ENCODE measurements at regions of chr10 and their contacts with region 1.

Region 1: DNA sequence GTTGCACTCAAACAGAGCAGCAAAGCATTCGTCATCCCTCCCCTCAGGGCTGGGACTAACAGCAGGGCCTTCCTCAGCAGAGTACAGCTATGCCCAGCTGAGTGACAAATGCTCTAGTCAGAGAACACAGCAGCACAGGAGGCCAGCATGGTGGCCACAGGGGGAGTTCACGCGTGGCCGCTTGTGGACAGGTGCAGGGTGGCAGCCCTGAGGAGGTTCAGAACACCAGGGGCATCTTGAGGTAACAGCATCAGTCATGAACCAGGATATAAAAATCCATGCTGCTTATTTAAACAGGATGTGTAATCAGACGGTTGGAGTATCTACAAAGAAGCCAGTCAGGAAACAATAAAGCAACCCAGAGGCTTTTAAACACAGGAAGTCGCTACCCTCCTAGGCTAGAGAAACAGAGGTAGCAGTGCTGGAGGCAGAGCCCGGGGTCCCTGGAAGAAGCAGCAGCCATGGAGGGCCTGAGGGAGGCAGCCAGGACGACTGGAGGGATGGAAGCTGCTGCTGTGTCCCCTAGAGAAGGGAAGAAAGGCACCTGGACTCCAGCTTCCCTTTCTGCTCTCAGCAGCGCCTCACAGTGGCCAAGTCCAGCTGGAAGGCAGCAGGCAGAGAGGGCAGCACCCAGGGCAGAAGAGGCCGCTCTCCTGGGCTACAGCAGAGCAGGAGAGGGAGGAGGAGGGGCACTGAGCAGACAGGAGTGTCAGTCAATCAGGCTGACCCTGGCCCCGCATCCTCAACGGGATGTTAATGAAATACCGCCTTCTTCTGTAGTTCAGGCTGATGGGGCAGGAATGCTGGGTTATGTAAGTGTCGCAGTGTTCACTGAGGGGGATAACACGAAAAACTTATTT is 70.8 kb upstream of the UCN3 start:
- DNase-seq: peak; percentile 49 to 78 (median 66)
- H3K4me3 ChIP-seq: peak overlapping the region; percentile 54 to 70
- H3K4me3 Mint-ChIP-seq: peak overlapping the region; percentile 91 to 100 (median 98)
- H3K27ac ChIP-seq: peak overlapping the region; percentile 81
- H3K27ac Mint-ChIP-seq: peak overlapping the region; percentile 96 to 100 (median 98)
- H3K4me1 ChIP-seq: peaks cover 71% of the 10 kb centered on the region
- H3K4me1 Mint-ChIP-seq: peaks cover 53 to 92% (median 79%) of the 10 kb centered on the region in 4 donors
- H3K27me3 ChIP-seq: no peaks in the 10 kb centered on the region
- H3K27me3 Mint-ChIP-seq: no peaks in the 10 kb centered on the region

Region 2: GRCh38 chr10:4825851-4826665 is 467.9 kb before region 1 on chr10 and contains the start of gene AKR1E2:
- CTCF ChIA-PET with region 1: no interaction called
- POLR2A ChIA-PET with region 1: interaction called, 16 read pairs
- intact Hi-C with region 1: loop called (anchors 10 kb)
- DNase-seq: peak; percentile 80 to 88 (median 87)
- H3K4me3 ChIP-seq: peak within 1 kb of the TSS in 1 of 2 donors; percentile 36
- H3K4me3 Mint-ChIP-seq: peak within 1 kb of the TSS; percentile 71 to 86 (median 83)
- H3K27ac ChIP-seq: peak within 1 kb of the TSS; percentile 32
- H3K27ac Mint-ChIP-seq: peak within 1 kb of the TSS; percentile 65 to 95 (median 89)
- H3K4me1 ChIP-seq: no peaks in the 10 kb centered on the region
- H3K4me1 Mint-ChIP-seq: peaks cover 7 to 25% (median 10%) of the 10 kb centered on the region in 4 donors
- H3K27me3 ChIP-seq: no peaks in the 10 kb centered on the region
- H3K27me3 Mint-ChIP-seq: peaks cover 9 to 20% of the 10 kb centered on the region in 2 donors
- total RNA-seq, gene AKR1E2: 9.2 to 9.8 TPM

Region 3: DNA sequence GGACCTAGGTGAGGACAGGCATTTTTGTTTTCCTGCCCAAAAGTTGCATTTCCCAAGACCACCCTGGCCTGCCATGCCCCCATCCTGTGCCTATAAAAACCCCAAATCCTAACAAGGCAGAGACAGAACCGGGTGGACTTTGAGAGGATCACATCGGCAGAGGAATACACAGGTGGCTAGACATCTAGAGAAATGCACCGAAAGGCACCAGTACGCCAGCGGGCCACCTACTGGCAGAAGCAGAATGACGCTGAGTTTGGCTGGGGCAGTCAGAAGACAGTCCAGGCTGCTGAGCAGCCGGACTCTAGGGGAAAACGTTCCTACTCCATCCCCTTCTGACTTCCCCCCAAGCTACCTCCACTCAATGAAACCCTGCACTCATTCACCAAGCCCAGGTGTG is 94.5 kb before region 1 on chr10:
- CTCF ChIA-PET with region 1: no interaction called
- POLR2A ChIA-PET with region 1: no interaction called
- intact Hi-C with region 1: no loop called
- DNase-seq: no peak
- H3K4me3 ChIP-seq: no peak overlapping the region
- H3K4me3 Mint-ChIP-seq: no peak overlapping the region
- H3K27ac ChIP-seq: no peak overlapping the region
- H3K27ac Mint-ChIP-seq: no peak overlapping the region
- H3K4me1 ChIP-seq: no peaks in the 10 kb centered on the region
- H3K4me1 Mint-ChIP-seq: no peaks in the 10 kb centered on the region
- H3K27me3 ChIP-seq: no peaks in the 10 kb centered on the region
- H3K27me3 Mint-ChIP-seq: peaks cover 1 to 2% of the 10 kb centered on the region in 2 donors

Region 4: DNA sequence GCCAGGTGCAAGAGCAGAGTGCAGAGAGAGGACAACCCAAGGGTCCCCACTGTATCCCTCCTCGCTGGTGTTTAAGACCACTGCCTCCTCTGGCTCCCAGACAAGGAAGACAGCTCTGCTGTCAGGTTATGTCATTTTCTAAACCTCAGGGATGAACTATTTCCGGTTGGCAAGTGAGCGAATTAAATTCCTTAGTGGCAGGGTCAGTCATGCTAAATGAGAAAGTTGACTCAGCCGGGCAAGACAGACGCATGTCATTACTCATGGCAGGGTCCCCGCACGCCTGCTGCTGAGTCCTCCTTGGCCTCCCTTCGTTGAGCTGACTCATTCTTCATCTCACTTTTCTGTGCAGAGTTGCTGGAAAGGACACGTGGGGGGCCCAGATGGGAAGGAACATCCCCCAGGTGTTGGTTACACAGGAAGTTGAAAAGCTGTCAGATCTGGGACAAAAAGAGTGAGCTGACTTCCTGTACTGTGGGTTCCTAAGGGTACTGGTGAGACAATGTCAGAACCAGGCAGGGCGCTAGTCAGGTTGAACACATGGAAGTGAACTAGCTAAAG is 23.7 kb after region 1 on chr10:
- CTCF ChIA-PET with region 1: interaction called, 5 read pairs
- POLR2A ChIA-PET with region 1: interaction called, 43 read pairs
- intact Hi-C with region 1: loop called (anchors 1 kb)
- DNase-seq: peak; percentile 43 to 90 (median 45)
- H3K4me3 ChIP-seq: no peak overlapping the region
- H3K4me3 Mint-ChIP-seq: peak overlapping the region in 7 of 8 donors; percentile 58 to 83 (median 71)
- H3K27ac ChIP-seq: no peak overlapping the region
- H3K27ac Mint-ChIP-seq: peak overlapping the region in 6 of 7 donors; percentile 72 to 90 (median 86)
- H3K4me1 ChIP-seq: peaks cover 36% of the 10 kb centered on the region
- H3K4me1 Mint-ChIP-seq: peaks cover 27 to 70% (median 56%) of the 10 kb centered on the region in 4 donors
- H3K27me3 ChIP-seq: no peaks in the 10 kb centered on the region
- H3K27me3 Mint-ChIP-seq: no peaks in the 10 kb centered on the region

Region 5: GRCh38 chr10:5343562-5343961 is 49.6 kb after region 1 on chr10:
- CTCF ChIA-PET with region 1: interaction called, 12 read pairs
- POLR2A ChIA-PET with region 1: interaction called, 7 read pairs
- intact Hi-C with region 1: no loop called
- DNase-seq: peak in 3 of 5 donors; percentile 3 to 19 (median 14)
- H3K4me3 ChIP-seq: no peak overlapping the region
- H3K4me3 Mint-ChIP-seq: no peak overlapping the region
- H3K27ac ChIP-seq: no peak overlapping the region
- H3K27ac Mint-ChIP-seq: no peak overlapping the region
- H3K4me1 ChIP-seq: no peaks in the 10 kb centered on the region
- H3K4me1 Mint-ChIP-seq: peaks cover 1 to 9% (median 5%) of the 10 kb centered on the region in 4 donors
- H3K27me3 ChIP-seq: no peaks in the 10 kb centered on the region
- H3K27me3 Mint-ChIP-seq: peaks cover 0 to 2% of the 10 kb centered on the region in 2 donors

Region 6: GRCh38 chr10:5385224-5385623 is 91.3 kb after region 1 on chr10:
- CTCF ChIA-PET with region 1: interaction called, 4 read pairs
- POLR2A ChIA-PET with region 1: interaction called, 6 read pairs
- intact Hi-C with region 1: loop called (anchors 2 kb)
- DNase-seq: no peak
- H3K4me3 ChIP-seq: no peak overlapping the region
- H3K4me3 Mint-ChIP-seq: no peak overlapping the region
- H3K27ac ChIP-seq: no peak overlapping the region
- H3K27ac Mint-ChIP-seq: no peak overlapping the region
- H3K4me1 ChIP-seq: no peaks in the 10 kb centered on the region
- H3K4me1 Mint-ChIP-seq: peaks cover 0 to 2% (median 0%) of the 10 kb centered on the region in 4 donors
- H3K27me3 ChIP-seq: no peaks in the 10 kb centered on the region
- H3K27me3 Mint-ChIP-seq: peaks cover 2 to 9% of the 10 kb centered on the region in 2 donors